ENCODE measurements at regions of chr13 and their contacts with region 1.

Region 1: DNA sequence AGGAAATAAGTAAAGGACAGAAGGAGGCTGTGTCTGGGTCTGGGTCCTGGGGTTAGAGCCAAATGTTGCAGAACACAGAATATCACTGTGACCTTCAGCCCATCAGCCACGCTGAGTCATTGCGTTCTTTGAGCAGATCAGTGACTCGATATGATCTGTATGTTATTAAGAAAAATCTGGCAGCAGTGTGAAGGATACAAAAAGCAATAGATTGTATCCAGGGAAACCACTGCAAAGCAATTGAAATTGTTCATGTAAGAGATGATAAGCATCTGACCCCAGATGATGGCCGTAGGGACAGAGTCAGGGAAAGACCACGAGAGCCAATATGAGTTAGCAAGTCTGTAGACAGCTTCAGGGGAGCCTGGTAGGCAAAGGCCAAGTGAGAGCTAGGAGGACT is 1575.1 kb upstream of the SLC10A2 start:
- DNase-seq: peak; percentile 4
- H3K4me3 Mint-ChIP-seq: no peak overlapping the region
- H3K27ac Mint-ChIP-seq: no peak overlapping the region
- H3K4me1 Mint-ChIP-seq: peaks cover 10% of the 10 kb centered on the region
- H3K27me3 Mint-ChIP-seq: no peaks in the 10 kb centered on the region
- CTCF ChIP-seq: no peak

Region 2: DNA sequence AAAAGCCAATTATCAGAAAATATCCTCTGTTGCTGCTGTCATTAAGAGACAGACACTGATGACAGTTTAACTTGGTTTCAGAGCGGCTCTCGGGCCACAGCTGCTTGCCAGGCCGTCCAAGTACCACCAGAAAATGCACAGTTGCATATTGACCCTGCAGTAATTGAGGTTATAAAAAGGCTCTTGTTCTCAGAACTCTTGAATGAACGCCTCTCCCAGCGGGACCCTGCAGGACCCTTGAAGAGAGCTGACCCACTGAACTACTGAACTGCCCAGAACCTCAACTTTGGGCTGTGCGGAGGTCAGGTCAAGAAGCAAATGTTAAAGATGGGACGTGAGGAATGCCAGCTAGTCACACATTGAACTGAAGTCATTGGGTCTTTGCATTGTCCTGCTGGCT is 16.1 kb before region 1 on chr13:
- CTCF ChIA-PET with region 1: interaction called, 10 read pairs
- POLR2A ChIA-PET with region 1: no interaction called
- intact Hi-C with region 1: no loop called
- DNase-seq: no peak
- H3K4me3 Mint-ChIP-seq: no peak overlapping the region
- H3K27ac Mint-ChIP-seq: no peak overlapping the region
- H3K4me1 Mint-ChIP-seq: no peaks in the 10 kb centered on the region
- H3K27me3 Mint-ChIP-seq: no peaks in the 10 kb centered on the region
- CTCF ChIP-seq: no peak

Region 3: DNA sequence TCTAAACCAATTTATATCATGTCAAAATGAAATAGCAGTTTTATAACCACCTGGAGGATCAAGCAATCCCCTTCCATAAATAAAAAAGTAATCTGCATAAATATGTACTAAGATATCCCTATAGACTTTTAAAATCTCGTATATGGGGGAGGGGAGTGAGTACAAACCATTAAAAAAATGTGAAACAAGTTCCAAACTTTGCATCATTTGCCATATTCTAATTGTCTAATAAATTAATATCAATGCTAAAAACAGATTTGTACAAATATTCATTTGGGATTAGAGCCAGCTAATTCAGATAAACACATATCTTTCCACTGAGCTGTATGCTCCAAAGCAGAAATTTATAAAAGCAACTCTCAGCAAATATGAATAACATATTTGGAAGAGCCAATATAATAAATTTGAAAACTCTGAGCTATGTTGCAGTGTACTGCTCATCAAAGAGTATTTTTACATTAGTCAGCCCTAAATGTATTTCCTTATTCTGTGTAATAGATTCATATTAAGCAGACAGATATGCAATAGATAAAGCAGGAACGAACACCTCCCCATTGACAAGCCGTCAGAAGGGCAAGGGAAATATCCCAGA is 923.9 kb after region 1 on chr13:
- CTCF ChIA-PET with region 1: no interaction called
- POLR2A ChIA-PET with region 1: no interaction called
- intact Hi-C with region 1: no loop called
- DNase-seq: no peak
- H3K4me3 Mint-ChIP-seq: no peak overlapping the region
- H3K27ac Mint-ChIP-seq: no peak overlapping the region
- H3K4me1 Mint-ChIP-seq: no peaks in the 10 kb centered on the region
- H3K27me3 Mint-ChIP-seq: no peaks in the 10 kb centered on the region
- CTCF ChIP-seq: no peak

Measured in MCF 10A (cell line).